Esophagus squamous epithelium (tissue), 5 donors: ENCODE measurements at regions of chr14 and their contacts with region 1.

Region 1: DNA sequence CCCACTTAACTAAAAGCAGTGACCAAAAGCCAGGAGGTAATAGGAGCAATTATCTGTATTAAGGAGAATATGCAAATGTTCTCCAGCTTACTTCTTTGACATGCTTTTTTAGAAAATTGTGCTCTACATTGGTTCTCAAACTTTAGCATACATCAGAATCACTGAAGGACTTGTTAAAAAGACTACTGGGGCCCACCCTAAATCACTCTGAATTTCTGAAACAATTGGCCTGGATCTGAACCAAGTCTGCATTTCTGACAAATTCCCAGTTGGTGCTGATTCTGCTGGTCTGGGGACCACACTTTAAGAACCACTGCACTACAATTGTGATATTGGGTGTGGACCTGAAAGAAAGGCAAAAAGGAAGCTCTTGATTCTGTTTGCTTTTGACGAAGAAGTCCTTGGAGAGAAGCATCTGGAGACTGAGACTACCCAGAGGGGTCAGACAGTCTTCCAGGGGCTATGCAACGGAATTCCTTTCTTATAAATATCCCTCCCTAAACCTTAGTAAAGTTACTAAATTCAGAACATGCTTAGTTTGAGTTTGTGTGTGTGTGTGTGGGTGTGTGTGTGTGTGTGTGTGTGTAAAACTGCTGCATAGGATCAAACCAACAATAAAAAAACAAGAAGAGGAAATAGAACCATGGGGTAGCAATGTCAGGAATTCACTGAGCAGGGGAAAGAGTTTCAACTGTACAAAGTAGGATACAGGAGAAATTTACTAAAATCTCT is 36.8 kb downstream of the EAPP start:
- DNase-seq: no peak
- H3K4me3 ChIP-seq: no peak overlapping the region
- H3K27ac ChIP-seq: no peak overlapping the region
- H3K4me1 ChIP-seq: peaks cover 6 to 13% (median 8%) of the 10 kb centered on the region in 3 donors
- H3K27me3 ChIP-seq: no peaks in the 10 kb centered on the region
- CTCF ChIP-seq: no peak
- POLR2A ChIP-seq: no peak

Region 2: GRCh38 chr14:34331728-34332623 is 170.7 kb before region 1 on chr14:
- intact Hi-C with region 1: loop called (anchors 10 kb)
- DNase-seq: no peak
- H3K4me3 ChIP-seq: peak overlapping the region in 1 of 4 donors; percentile 9
- H3K27ac ChIP-seq: peak overlapping the region; percentile 66 to 88 (median 81)
- H3K4me1 ChIP-seq: peaks cover 0 to 31% (median 5%) of the 10 kb centered on the region in 3 donors
- H3K27me3 ChIP-seq: no peaks in the 10 kb centered on the region
- CTCF ChIP-seq: peak; percentile 77 to 96 (median 88)
- POLR2A ChIP-seq: no peak

Region 3: GRCh38 chr14:34582117-34582680 is 79.5 kb after region 1 on chr14:
- intact Hi-C with region 1: no loop called
- DNase-seq: no peak
- H3K4me3 ChIP-seq: no peak overlapping the region
- H3K27ac ChIP-seq: no peak overlapping the region
- H3K4me1 ChIP-seq: no peaks in the 10 kb centered on the region
- H3K27me3 ChIP-seq: no peaks in the 10 kb centered on the region
- CTCF ChIP-seq: no peak
- POLR2A ChIP-seq: no peak